ENCODE measurements at regions of chr2 and their contacts with region 1.

Region 1: DNA sequence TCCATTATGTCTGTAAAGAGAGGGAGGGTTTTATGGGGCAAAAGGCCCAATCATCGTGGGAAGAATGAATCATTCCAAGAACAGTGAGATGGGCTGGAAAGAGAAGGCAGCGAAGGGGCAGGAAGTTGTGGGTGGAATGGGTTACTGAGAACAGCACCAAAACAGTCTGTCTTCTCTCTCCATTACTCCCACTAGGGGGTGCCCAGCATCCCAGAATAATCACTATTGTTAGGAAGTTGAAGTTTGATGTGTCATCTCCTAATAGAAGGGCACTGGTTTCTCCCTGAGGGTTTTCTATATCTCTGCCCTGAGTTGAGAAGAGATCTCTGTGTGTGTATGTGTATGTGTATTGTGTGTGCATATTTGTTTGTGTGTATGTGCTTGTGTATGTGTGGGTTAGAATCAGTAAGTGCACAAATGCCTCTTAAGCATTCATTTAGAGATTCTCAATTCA is 76.6 kb upstream of the MAP4K3 start:
- DNase-seq: peak; percentile 40
- H3K4me3 ChIP-seq: no peak overlapping the region
- H3K27ac ChIP-seq: peak overlapping the region in 1 of 2 donors; percentile 8
- H3K4me1 ChIP-seq: no peaks in the 10 kb centered on the region
- H3K27me3 ChIP-seq: no peaks in the 10 kb centered on the region
- CTCF ChIP-seq: peak in 3 of 4 experiments; percentile 48 to 71 (median 51)
- POLR2A ChIP-seq: no peak

Region 2: DNA sequence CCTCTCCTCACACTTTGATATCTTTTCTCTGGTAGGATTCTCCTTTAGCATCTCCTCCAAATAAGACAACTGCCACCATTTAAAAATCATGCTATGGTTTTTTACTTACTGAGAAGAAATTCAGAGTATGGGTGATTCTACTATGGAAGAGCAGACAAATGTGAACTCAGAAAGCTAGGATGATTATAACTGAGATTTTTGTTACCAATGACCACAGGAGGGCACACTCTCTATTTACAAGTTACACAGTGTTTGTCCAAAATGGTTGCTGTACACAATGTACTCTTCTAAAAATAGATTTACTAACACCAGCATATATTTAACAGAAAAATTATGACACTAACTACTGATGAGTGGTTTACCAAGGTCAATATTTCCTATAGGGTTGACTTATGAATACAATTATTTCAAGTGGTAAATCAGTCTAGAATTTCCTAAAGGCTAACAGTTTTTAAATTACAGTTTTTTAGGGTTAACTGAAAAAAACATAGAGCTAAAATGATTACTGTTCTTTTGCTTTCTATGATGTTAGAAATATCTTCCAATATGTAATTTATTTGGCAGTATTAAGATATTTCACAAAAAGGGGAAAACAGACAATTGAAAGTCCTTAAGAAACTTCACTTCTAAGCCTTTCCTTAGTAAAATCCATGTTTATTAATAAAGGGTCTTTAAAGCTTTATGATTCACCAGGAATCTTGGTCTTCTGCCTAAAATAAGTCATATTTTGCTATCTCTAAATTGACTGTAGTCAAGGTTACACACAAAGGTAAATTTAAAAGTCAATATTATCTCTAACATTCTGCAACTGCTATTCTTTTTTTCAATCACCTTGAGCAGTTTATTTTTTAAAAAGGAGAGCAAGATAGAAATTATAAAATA is 133.8 kb before region 1 on chr2:
- intact Hi-C with region 1: loop called (anchors 5 kb)
- DNase-seq: peak; percentile 61
- H3K4me3 ChIP-seq: no peak overlapping the region
- H3K27ac ChIP-seq: peak overlapping the region in 1 of 2 donors; percentile 19
- H3K4me1 ChIP-seq: no peaks in the 10 kb centered on the region
- H3K27me3 ChIP-seq: no peaks in the 10 kb centered on the region
- CTCF ChIP-seq: peak in 3 of 4 experiments; percentile 63 to 73 (median 72)
- POLR2A ChIP-seq: no peak

Region 3: DNA sequence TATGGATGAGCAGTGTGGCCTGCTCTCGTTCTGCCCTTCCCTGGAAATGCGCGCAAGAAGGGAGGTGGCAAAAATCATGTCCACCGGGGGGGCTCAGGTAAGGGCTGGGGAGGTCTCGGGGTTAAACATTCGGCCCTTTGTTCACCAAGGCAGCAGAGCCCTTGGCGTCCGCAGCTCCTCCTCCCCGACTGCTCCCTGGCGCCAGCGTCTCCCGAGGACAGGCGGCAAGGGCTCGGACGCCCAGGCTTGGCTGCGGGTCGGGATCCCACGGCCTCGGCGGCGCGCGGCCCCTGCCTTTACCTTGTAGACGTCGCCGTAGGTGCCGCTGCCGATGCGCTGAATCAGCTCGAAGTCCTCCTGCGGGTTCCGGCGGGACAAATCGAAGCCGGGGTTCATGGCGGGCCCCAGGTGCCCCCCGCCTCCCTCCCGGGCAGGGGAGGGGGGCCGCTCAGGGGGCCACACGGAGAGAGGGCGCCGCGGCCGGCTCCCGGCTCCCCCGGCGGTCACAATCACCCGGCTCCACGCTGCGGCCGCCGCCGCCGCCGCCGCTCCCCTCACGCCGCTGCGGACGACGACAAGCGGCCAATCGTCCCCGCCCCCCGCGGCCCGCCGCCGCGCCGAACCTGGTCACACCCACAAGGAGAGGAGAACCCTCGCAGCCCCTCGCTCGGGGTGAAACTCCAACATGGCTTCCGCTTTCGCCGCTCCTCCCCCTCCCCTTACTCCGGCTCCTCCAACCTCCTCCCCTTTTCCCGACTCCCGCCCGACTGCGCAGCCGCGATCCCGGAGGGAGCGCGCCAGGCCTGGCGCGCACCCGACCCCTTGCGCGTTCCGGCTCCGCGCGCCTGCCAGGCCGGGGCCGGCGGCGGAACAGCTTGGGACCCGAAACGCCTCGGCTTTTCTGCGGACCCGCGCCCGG is 76.8 kb before region 1 on chr2 and contains the start of gene MAP4K3:
- intact Hi-C with region 1: loop called (anchors 5 kb)
- DNase-seq: peak; percentile 92
- H3K4me3 ChIP-seq: peak within 1 kb of the TSS; percentile 79 to 94
- H3K27ac ChIP-seq: peak within 1 kb of the TSS; percentile 94 to 98
- H3K4me1 ChIP-seq: peaks cover 6% of the 10 kb centered on the region
- H3K27me3 ChIP-seq: no peaks in the 10 kb centered on the region
- CTCF ChIP-seq: no peak
- POLR2A ChIP-seq: peak; percentile 89
- total RNA-seq, gene MAP4K3: 34.3 to 41.8 TPM

Region 4: DNA sequence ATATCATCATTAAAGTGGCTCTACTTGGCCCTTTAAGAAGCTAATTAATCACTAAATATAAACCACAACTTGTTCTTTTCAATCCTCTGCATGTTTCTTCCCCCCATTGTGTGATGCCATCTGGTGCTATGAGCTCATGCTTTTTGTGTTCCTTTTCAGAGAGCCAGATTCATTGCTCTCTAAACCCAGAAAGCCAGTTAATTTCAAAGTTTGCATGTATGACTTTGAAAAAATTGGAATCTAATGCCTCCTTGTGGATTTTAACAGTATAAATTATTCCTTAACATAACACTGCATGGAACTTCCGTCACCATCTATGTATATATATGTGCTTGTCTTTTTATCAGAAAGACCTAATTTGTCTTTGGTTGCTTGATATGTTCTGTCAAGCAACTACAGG is 183.2 kb after region 1 on chr2:
- intact Hi-C with region 1: loop called (anchors 10 kb)
- DNase-seq: no peak
- H3K4me3 ChIP-seq: no peak overlapping the region
- H3K27ac ChIP-seq: no peak overlapping the region
- H3K4me1 ChIP-seq: no peaks in the 10 kb centered on the region
- H3K27me3 ChIP-seq: no peaks in the 10 kb centered on the region
- CTCF ChIP-seq: peak in 3 of 4 experiments; percentile 36 to 64 (median 54)
- POLR2A ChIP-seq: no peak

Region 5: DNA sequence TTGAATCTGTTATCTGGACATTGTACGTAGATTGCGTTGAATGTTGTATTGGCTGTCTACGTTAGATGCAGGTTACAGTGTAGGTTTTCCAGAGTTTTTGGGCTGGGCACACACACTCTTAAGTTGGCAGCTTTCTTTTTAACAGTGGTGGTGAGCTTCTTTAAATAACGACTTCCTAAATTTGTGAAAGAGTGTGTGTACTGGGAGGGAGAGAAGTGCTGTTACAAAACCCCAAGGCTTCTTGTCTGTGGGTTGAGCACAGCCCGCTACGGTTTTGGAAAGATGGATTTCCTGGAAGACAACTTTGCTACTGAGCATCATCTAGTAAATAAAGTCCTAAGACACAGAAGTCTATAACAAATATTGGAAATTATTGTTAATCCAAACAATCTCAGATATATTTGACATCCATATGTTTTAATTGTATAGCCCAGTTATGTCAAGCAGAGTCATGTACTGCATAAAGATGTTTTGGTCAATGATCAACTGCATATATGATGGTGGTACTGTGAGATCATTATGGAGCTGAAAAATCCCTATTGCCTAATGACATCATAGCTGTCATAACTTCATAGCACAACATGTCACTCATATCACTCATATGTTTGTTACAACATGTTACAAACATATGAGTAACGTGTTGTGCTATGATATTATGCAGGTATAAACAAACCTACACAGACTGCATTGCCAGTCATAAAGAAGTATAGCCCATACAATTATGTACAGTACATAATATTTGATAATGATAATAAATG is 273.3 kb after region 1 on chr2:
- intact Hi-C with region 1: no loop called
- DNase-seq: no peak
- H3K4me3 ChIP-seq: no peak overlapping the region
- H3K27ac ChIP-seq: no peak overlapping the region
- H3K4me1 ChIP-seq: no peaks in the 10 kb centered on the region
- H3K27me3 ChIP-seq: no peaks in the 10 kb centered on the region
- CTCF ChIP-seq: no peak
- POLR2A ChIP-seq: no peak

Region 6: DNA sequence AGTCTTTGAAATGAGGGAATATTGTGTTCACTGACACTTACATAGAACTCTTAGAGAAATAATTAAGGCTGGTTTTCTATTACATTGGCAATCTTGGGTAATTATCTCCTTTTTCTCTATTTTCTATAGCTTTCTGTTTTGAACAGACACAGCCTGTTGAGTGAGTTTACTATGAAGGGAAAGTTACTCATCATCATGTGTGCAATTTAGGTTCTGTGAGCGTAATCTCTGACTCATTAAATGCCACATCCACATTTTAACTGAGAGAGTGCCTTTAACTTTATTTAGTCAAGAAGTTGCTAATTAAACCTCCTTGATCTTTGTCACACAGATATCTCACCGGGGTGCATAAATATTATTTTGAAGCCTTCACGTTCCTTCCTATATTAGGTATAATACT is 1112.2 kb after region 1 on chr2:
- intact Hi-C with region 1: no loop called
- DNase-seq: no peak
- H3K4me3 ChIP-seq: no peak overlapping the region
- H3K27ac ChIP-seq: no peak overlapping the region
- H3K4me1 ChIP-seq: no peaks in the 10 kb centered on the region
- H3K27me3 ChIP-seq: no peaks in the 10 kb centered on the region
- CTCF ChIP-seq: no peak
- POLR2A ChIP-seq: no peak

Measured in prostate gland (tissue), 2 donors.